Activated naive CD4-positive, alpha-beta T cell treated with anti-CD3 and anti-CD28 coated beads for 36 hours (primary cell): ENCODE measurements at regions of chr1 and their contacts with region 1.

Region 1: DNA sequence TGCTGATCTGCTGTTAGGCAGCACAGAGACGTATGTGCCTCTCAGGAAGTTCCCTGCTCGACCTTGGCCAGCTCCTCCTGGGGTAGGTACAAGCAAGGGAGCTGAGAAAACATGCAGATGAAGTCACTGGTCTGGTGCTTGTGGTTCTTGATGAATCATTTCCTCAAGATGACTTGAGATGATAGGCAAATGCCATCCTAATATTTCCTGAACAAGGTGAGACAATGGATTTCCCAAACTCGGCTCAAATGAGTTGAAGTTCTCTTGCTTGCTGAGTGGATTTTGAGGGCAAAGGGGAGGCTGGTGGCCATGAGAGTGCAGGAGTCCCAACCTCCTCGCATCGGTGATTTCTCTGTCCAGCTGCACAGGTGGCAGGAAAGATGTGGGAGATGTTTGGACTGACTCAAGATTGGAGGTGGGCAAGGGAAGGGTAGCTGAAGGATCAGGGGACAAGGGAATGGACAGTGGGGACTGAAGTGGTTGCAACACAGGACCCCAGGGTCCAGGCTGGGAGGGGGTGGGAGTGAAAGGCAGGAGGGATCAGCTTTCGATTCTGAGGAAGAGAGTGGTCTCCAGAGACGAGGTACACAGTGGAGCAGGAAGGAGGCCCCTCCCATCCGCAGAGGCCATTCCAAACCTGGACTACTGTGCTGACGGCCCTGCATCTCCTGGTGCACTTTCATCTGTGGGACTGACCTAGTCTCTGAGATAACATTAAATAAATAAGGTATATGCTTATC is 63.9 kb downstream of the CAPN2 start:
- DNase-seq: peak; percentile 83
- H3K4me3 Mint-ChIP-seq: peak overlapping the region; percentile 10
- H3K27ac Mint-ChIP-seq: peak overlapping the region; percentile 86
- H3K4me1 Mint-ChIP-seq: peaks cover 41% of the 10 kb centered on the region
- H3K27me3 Mint-ChIP-seq: no peaks in the 10 kb centered on the region

Region 2: GRCh38 chr1:223639331-223639749 is 136.9 kb before region 1 on chr1:
- CTCF ChIA-PET with region 1: no interaction called
- intact Hi-C with region 1: no loop called
- DNase-seq: no peak
- H3K4me3 Mint-ChIP-seq: no peak overlapping the region
- H3K27ac Mint-ChIP-seq: no peak overlapping the region
- H3K4me1 Mint-ChIP-seq: peaks cover 6% of the 10 kb centered on the region
- H3K27me3 Mint-ChIP-seq: no peaks in the 10 kb centered on the region

Region 3: GRCh38 chr1:223695941-223696340 is 80.3 kb before region 1 on chr1:
- CTCF ChIA-PET with region 1: interaction called, 10 read pairs
- intact Hi-C with region 1: loop called (anchors 2 kb)
- DNase-seq: no peak
- H3K4me3 Mint-ChIP-seq: no peak overlapping the region
- H3K27ac Mint-ChIP-seq: no peak overlapping the region
- H3K4me1 Mint-ChIP-seq: peaks cover 7% of the 10 kb centered on the region
- H3K27me3 Mint-ChIP-seq: no peaks in the 10 kb centered on the region

Region 4: DNA sequence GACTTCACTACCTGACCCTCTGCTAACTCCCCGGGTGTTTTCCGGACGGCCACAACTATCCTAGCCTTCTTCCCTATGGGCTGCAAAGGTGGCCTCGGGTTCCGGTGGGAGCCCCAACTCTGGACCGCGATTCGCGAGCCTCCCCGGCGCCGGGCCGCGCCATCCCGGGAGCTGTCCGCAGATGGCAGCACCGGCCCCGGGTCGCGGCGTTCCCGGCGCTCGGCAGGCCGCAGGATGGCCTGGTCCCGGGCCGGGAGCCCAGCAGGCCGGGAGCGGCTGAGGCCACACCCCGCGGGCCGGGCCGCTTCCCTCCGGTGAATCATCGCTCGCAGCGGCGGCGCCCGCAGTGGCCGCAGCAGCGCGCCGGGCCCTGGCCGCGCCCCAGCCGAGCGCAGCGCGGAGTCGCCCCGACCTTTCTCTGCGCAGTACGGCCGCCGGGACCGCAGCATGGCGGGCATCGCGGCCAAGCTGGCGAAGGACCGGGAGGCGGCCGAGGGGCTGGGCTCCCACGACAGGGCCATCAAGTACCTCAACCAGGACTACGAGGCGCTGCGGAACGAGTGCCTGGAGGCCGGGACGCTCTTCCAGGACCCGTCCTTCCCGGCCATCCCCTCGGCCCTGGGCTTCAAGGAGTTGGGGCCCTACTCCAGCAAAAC is 63.9 kb before region 1 on chr1 and contains the start of gene CAPN2:
- CTCF ChIA-PET with region 1: interaction called, 3 read pairs
- intact Hi-C with region 1: loop called (anchors 1 kb)
- DNase-seq: peak; percentile 65
- H3K4me3 Mint-ChIP-seq: peak within 1 kb of the TSS; percentile 75
- H3K27ac Mint-ChIP-seq: peak within 1 kb of the TSS; percentile 41
- H3K4me1 Mint-ChIP-seq: peaks cover 52% of the 10 kb centered on the region
- H3K27me3 Mint-ChIP-seq: no peaks in the 10 kb centered on the region
- total RNA-seq, gene CAPN2: 17.0 to 19.5 TPM

Region 5: GRCh38 chr1:223726380-223727001 is 49.8 kb before region 1 on chr1:
- CTCF ChIA-PET with region 1: no interaction called
- intact Hi-C with region 1: loop called (anchors 1 kb)
- DNase-seq: peak; percentile 98
- H3K4me3 Mint-ChIP-seq: peak overlapping the region; percentile 52
- H3K27ac Mint-ChIP-seq: peak overlapping the region; percentile 65
- H3K4me1 Mint-ChIP-seq: peaks cover 57% of the 10 kb centered on the region
- H3K27me3 Mint-ChIP-seq: no peaks in the 10 kb centered on the region

Region 6: DNA sequence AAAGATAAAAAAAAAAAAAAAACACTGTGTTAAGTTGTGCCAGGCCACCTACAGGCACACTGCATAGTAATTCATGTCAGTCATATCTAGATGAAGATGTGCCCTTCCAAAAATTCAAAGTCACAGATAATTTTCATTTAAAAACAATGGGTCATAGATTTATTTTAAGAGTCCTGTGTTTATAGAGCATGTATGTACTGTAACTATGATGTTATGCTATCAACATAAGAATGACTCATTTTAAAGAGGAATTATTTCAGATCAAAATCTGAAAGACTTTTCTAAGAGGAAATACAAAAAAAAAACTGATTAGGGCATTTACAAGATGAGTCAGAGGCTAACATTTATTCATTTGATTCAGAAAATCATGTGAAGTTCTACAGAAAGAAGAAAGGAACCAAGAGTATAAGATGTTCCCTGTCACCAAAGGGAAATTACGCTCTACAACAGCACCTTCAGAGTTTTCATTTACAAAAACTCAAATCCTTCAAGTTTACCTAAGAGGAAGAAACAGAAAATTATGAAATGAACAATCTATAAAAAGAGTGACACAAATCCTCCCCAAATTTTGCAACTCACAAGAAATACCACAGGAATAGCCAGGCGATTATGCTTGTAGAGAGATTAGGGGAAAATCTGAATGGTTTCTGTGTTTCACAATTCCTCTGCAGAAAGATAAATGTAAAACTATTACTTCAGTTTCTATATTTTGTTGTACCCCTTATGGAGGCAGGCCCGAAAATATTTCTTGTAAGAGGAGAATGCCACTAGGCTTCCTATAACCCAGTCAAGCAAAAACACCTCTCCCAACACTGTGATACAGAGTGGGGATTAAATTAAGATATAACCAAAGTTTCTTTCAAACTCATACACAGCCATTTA is 55.8 kb after region 1 on chr1:
- CTCF ChIA-PET with region 1: no interaction called
- intact Hi-C with region 1: loop called (anchors 1 kb)
- DNase-seq: peak; percentile 14
- H3K4me3 Mint-ChIP-seq: peak overlapping the region; percentile 28
- H3K27ac Mint-ChIP-seq: peak overlapping the region; percentile 93
- H3K4me1 Mint-ChIP-seq: peaks cover 28% of the 10 kb centered on the region
- H3K27me3 Mint-ChIP-seq: no peaks in the 10 kb centered on the region

Region 7: DNA sequence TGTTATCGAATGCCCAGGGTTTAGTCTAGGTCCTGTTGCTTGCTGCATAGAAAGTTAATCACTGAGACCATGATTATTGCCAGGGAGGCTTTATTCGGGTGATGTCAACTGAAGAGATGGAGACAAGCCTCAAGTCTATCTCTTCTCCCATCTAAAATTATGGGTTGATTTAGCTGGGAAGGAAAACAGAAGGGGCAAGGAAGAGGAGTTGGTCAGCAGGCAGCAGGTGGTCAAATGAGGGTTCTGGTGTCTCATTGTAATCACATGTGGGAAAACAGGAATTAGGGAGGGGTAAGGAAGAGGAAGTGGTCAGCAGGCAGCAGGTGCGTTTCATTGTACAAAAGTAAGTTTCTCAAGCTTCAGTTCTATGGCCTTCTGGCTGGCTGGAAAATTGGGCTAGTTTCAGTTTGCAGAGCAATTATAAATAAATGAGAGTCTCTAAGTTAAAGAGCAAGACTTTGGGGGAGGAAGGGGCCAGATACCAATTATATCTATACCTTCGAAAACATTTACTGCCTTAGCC is 1006.9 kb after region 1 on chr1:
- CTCF ChIA-PET with region 1: no interaction called
- intact Hi-C with region 1: no loop called
- DNase-seq: no peak
- H3K4me3 Mint-ChIP-seq: no peak overlapping the region
- H3K27ac Mint-ChIP-seq: no peak overlapping the region
- H3K4me1 Mint-ChIP-seq: peaks cover 12% of the 10 kb centered on the region
- H3K27me3 Mint-ChIP-seq: no peaks in the 10 kb centered on the region